Lower leg skin (tissue), 4 donors: ENCODE measurements at regions of chr4 and their contacts with region 1.

Region 1: GRCh38 chr4:169619959-169620879 is at the start of gene CLCN3:
- DNase-seq: peak; percentile 97 to 99
- H3K4me3 ChIP-seq: peak within 1 kb of the TSS; percentile 52
- CTCF ChIP-seq: peak in 1 of 3 donors; percentile 18
- POLR2A ChIP-seq: peak in 1 of 2 donors; percentile 74
- total RNA-seq, gene CLCN3: 32.8 to 75.4 (median 57.8) TPM

Region 2: DNA sequence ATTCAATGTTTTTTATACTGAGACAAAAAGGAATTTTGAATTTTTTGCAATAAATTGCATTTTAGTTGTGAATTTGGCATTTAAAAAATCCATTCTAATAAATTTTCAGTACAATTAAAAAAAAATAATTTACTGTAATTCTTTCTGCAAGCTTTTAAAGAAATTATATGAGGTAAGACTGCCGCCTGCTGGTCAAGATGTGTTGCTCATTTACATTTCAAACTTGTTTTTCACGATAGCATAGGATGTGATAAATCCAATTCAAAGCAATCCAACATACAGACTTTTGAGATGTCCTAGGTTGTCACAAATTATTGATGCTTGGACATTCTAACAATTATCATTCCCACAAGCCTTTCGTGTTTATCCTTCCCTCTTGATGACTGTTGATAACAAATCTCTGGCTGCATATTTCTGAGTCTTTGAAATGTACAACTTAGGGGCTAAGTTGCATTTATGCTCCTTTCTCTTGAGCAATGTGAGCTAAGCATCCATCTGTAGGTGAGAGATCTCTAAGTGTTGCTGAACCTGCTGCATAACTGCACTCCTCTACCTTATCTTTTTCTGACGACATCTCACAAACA is 427.6 kb after region 1 on chr4:
- intact Hi-C with region 1: loop called (anchors 10 kb)
- DNase-seq: peak in 1 of 2 donors; percentile 31
- H3K4me3 ChIP-seq: no peak overlapping the region
- CTCF ChIP-seq: no peak
- POLR2A ChIP-seq: no peak

Region 3: DNA sequence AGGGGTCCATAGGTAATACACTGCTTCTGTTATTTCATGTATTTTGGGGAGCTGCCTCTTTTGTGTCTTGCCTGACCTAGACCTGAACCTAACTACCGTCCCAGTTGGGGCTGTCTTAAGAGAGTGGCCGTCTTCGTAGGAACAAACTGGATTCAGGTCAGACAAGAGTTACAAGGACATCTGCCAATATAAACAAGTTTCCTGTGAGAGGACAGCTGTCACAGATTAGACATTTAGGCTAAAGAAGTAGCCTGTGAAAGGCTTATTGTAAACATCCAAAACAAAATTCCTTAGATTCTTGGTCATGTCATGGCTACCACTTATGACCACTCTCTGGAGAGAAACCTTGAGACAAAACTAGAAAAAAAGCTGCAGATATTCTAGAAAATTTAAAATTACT is 1267.2 kb after region 1 on chr4:
- intact Hi-C with region 1: no loop called
- DNase-seq: no peak
- H3K4me3 ChIP-seq: no peak overlapping the region
- CTCF ChIP-seq: no peak
- POLR2A ChIP-seq: no peak